Activated CD4-positive, alpha-beta memory T cell treated with anti-CD3 and anti-CD28 coated beads, Interleukin-2, amount 10 ng/mL, durations not matched to agents 7 days and 5 days (primary cell): ENCODE measurements at regions of chr12 and their contacts with region 1.

Region 1: DNA sequence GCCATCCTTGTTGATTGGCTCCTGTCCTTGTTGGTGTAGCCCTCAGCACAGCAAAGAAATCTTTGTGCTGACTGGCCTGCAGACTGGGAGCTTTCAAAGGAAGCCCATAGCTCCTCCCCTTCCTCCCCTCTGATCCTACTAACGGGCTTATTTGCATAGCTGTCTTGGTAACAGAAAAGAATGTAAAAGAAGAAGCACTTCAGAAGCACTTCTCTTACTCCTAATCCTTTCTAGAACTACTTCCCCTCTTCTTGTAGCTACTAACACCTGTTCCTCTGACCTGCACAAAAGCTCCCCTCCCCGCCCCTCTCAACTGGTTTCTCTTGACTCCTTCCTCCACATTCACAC is 14.3 kb upstream of the RIC8B start:
- DNase-seq: no peak
- H3K4me3 Mint-ChIP-seq: peak overlapping the region; percentile 12
- H3K27ac Mint-ChIP-seq: peak overlapping the region; percentile 67
- H3K4me1 Mint-ChIP-seq: peaks cover 11% of the 10 kb centered on the region
- H3K27me3 Mint-ChIP-seq: no peaks in the 10 kb centered on the region

Region 2: DNA sequence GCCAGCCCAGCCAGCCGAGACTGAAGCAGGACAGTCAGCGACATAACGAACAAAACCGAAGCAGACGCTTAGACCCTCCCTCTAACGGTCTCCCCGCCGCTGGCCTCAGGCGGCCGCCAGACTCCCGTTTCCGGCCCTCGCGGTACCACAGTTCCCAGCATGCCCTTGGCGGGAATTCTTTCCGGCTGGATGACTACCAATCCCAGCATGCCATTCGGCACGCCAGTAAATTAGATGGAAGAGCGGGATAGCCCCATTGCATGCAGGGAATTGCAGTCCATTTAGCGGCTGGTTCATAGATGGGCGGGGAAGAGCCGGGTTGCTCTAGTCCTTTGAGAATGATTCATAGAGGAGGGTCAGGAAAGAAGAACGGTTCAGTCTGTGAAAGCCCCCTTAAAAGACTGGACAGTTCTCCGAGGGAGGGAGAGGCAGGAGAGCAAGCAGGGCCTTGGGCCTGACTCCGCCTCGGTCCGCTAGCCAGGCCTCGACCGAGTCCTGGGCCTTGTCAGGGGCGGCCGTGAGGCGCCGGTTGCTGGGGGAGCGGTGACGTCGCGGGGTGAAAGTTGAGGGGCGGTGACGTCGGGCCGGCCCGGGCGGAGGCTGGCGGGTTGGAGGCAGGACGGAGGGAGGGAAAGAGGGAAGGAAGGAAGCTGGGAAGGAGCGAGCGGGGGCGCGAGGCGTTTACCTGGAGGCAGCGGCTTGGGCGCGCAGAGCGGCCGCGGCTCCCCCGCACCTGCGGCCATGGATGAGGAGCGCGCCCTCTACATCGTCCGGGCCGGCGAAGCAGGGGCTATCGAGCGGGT is 14.0 kb after region 1 on chr12 and contains the start of gene RIC8B:
- CTCF ChIA-PET with region 1: interaction called, 9 read pairs
- POLR2A ChIA-PET with region 1: interaction called, 10 read pairs
- DNase-seq: peak; percentile 84
- H3K4me3 Mint-ChIP-seq: peak within 1 kb of the TSS; percentile 93
- H3K27ac Mint-ChIP-seq: peak within 1 kb of the TSS; percentile 87
- H3K4me1 Mint-ChIP-seq: peaks cover 29% of the 10 kb centered on the region
- H3K27me3 Mint-ChIP-seq: no peaks in the 10 kb centered on the region
- total RNA-seq, gene RIC8B: 9.1 to 11.6 TPM

Region 3: GRCh38 chr12:106924268-106924861 is 164.2 kb after region 1 on chr12:
- CTCF ChIA-PET with region 1: no interaction called
- POLR2A ChIA-PET with region 1: no interaction called
- DNase-seq: no peak
- H3K4me3 Mint-ChIP-seq: no peak overlapping the region
- H3K27ac Mint-ChIP-seq: no peak overlapping the region
- H3K4me1 Mint-ChIP-seq: no peaks in the 10 kb centered on the region
- H3K27me3 Mint-ChIP-seq: peaks cover 24% of the 10 kb centered on the region